ENCODE measurements at regions of chr11 and their contacts with region 1.

Region 1: GRCh38 chr11:2400069-2400760 is at the start of gene TSSC4:
- DNase-seq: peak; percentile 100
- H3K4me3 Mint-ChIP-seq: peak within 1 kb of the TSS; percentile 95
- H3K27ac Mint-ChIP-seq: peak within 1 kb of the TSS; percentile 83
- H3K4me1 Mint-ChIP-seq: peaks cover 8% of the 10 kb centered on the region
- H3K27me3 Mint-ChIP-seq: no peaks in the 10 kb centered on the region
- total RNA-seq, gene TSSC4: 46.6 and 48.9 TPM in 2 replicates

Region 2: GRCh38 chr11:1389103-1389931 is 1010.9 kb before region 1 on chr11:
- intact Hi-C with region 1: loop called (anchors 10 kb)
- DNase-seq: peak; percentile 92
- H3K4me3 Mint-ChIP-seq: peak overlapping the region; percentile 51
- H3K27ac Mint-ChIP-seq: peak overlapping the region; percentile 33
- H3K4me1 Mint-ChIP-seq: peaks cover 8% of the 10 kb centered on the region
- H3K27me3 Mint-ChIP-seq: peaks cover 33% of the 10 kb centered on the region

Region 3: GRCh38 chr11:2196970-2197770 is 203.0 kb before region 1 on chr11:
- intact Hi-C with region 1: loop called (anchors 5 kb)
- DNase-seq: peak; percentile 56
- H3K4me3 Mint-ChIP-seq: no peak overlapping the region
- H3K27ac Mint-ChIP-seq: no peak overlapping the region
- H3K4me1 Mint-ChIP-seq: peaks cover 3% of the 10 kb centered on the region
- H3K27me3 Mint-ChIP-seq: peaks cover 11% of the 10 kb centered on the region

Region 4: GRCh38 chr11:2305140-2305840 is 94.9 kb before region 1 on chr11:
- intact Hi-C with region 1: loop called (anchors 1 kb)
- DNase-seq: peak; percentile 69
- H3K4me3 Mint-ChIP-seq: peak overlapping the region; percentile 59
- H3K27ac Mint-ChIP-seq: no peak overlapping the region
- H3K4me1 Mint-ChIP-seq: peaks cover 25% of the 10 kb centered on the region
- H3K27me3 Mint-ChIP-seq: no peaks in the 10 kb centered on the region

Region 5: GRCh38 chr11:2377511-2378443 is 22.4 kb before region 1 on chr11:
- intact Hi-C with region 1: loop called (anchors 1 kb)
- DNase-seq: peak; percentile 41
- H3K4me3 Mint-ChIP-seq: peak overlapping the region; percentile 86
- H3K27ac Mint-ChIP-seq: peak overlapping the region; percentile 87
- H3K4me1 Mint-ChIP-seq: peaks cover 15% of the 10 kb centered on the region
- H3K27me3 Mint-ChIP-seq: peaks cover 2% of the 10 kb centered on the region

Region 6: GRCh38 chr11:2444821-2445745 is 44.9 kb after region 1 on chr11 and contains the start of gene KCNQ1:
- intact Hi-C with region 1: loop called (anchors 1 kb)
- DNase-seq: peak; percentile 40
- H3K4me3 Mint-ChIP-seq: peak within 1 kb of the TSS; percentile 82
- H3K27ac Mint-ChIP-seq: no peak within 1 kb of the TSS
- H3K4me1 Mint-ChIP-seq: peaks cover 18% of the 10 kb centered on the region
- H3K27me3 Mint-ChIP-seq: peaks cover 12% of the 10 kb centered on the region
- total RNA-seq, gene KCNQ1: 3.4 and 4.0 TPM in 2 replicates

Region 7: DNA sequence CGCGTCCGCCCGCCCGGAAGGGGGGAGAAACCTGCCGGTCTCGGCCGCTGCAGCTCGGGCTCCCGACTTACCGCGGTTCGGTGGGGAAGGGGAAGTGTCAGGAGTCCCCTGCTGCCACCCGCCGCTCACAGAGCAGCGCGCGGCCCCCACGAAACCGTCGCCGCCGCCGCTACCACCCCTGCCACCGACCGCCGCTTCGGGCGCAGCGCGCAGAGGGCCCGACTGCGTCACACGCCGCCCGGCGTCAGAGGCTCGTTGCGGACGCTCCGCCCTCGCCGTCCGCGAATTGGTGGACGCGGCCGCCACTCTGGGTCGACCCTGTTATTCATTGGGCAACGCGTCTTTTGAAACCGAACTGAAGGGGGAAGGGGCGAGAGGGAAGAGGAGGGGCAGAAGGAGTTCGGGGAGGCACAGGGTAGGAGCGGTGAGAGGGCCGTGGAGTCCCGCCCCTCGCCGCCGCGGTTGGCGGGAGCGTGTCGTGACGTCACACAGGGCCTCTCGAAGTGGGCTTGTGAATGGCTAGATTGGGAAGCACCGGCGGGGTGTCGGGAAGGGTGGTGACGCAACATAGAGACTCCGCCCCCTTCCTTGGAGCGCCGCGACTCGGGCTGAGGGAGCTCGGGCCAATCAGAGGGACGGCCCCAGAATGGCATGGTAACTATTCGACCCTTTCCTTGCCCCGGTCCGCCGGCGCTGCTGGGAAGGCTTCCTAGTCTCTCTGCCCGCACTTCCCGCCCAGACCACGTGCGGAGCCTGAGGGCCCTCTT is 1397.3 kb after region 1 on chr11 and contains the start of gene NUP98:
- intact Hi-C with region 1: loop called (anchors 5 kb)
- DNase-seq: peak; percentile 100
- H3K4me3 Mint-ChIP-seq: peak within 1 kb of the TSS; percentile 98
- H3K27ac Mint-ChIP-seq: peak within 1 kb of the TSS; percentile 95
- H3K4me1 Mint-ChIP-seq: peaks cover 33% of the 10 kb centered on the region
- H3K27me3 Mint-ChIP-seq: no peaks in the 10 kb centered on the region
- total RNA-seq, gene NUP98: 123 and 131 TPM in 2 replicates